WTC11 (cell line): ENCODE measurements at regions of chr2 and their contacts with region 1.

Region 1: GRCh38 chr2:174697255-174697654 is 67.0 kb downstream of the CHRNA1 start:
- DNase-seq: peak; percentile 76
- ATAC-seq: peak; percentile 94
- H3K4me3 Mint-ChIP-seq: no peak overlapping the region
- H3K27ac Mint-ChIP-seq: no peak overlapping the region
- H3K4me1 Mint-ChIP-seq: peaks cover 16% of the 10 kb centered on the region
- H3K27me3 Mint-ChIP-seq: no peaks in the 10 kb centered on the region
- CTCF ChIP-seq: peak; percentile 60

Region 2: DNA sequence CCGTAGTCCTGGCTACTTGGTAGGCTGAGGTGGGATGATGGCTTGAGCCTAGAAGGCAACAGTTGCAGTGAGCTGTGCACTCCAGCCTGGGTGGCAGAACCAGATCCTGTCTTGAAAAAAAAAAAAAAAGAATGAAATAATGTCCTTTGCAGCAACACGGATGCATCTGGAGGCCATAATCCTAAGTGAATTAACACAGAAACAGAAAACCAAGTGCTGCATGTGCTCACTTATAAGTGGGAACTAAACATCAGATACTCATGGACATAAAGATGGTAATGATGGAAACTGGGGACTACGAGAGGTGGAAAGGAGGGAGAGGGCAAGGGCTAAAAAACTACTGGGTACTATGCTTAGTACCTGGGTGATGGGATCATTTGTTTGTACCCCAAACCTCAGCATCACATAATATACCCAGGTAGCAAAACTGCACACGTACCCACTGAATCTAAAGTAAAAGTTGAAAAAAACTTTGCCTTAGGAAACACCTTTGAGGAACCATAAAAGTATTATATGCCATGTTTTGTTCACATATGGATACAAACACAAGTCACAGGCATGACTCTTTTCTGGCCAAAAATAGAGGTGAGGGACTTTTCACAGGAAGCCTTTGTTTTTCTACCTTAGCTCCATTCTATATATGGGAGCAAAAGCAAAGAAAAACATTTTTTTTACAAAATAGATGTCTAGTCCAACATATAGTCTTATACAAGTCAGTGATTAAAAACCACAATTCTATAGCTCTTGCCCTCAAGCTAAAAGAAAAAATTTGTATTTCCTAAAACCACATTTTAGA is 247.0 kb before region 1 on chr2:
- CTCF ChIA-PET with region 1: no interaction called
- POLR2A ChIA-PET with region 1: no interaction called
- DNase-seq: no peak
- ATAC-seq: no peak
- H3K4me3 Mint-ChIP-seq: no peak overlapping the region
- H3K27ac Mint-ChIP-seq: no peak overlapping the region
- H3K4me1 Mint-ChIP-seq: peaks cover under 1% of the 10 kb centered on the region
- H3K27me3 Mint-ChIP-seq: no peaks in the 10 kb centered on the region; the same call in 1 of the 2 replicates
- CTCF ChIP-seq: no peak

Region 3: DNA sequence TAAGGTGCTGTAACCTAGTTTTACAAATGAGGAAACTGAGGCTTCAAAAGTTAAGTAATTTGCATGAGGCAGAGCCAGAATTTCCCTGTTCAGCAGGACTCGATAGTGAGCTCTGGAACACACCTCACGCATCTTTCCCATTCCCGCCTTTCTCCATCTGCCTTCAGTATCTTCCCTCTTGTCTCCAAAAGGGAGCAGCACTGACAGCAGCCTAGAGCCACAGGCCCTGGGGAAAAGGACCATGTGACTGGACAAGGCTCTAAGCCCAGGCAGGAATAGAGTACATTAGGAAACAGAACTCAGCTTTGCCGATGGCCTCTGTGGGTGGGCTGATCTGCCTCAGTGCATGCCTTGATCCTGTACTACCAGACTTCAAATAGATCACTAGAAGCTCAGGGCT is 231.9 kb before region 1 on chr2:
- CTCF ChIA-PET with region 1: interaction called, 17 read pairs
- POLR2A ChIA-PET with region 1: no interaction called
- DNase-seq: peak; percentile 56
- ATAC-seq: peak; percentile 97
- H3K4me3 Mint-ChIP-seq: no peak overlapping the region
- H3K27ac Mint-ChIP-seq: no peak overlapping the region
- H3K4me1 Mint-ChIP-seq: no peaks in the 10 kb centered on the region
- H3K27me3 Mint-ChIP-seq: peaks cover 11% of the 10 kb centered on the region
- CTCF ChIP-seq: no peak

Region 4: GRCh38 chr2:174682578-174683391 is 14.5 kb before region 1 on chr2:
- CTCF ChIA-PET with region 1: interaction called, 26 read pairs
- POLR2A ChIA-PET with region 1: no interaction called
- DNase-seq: peak; percentile 72
- ATAC-seq: peak; percentile 66
- H3K4me3 Mint-ChIP-seq: peak overlapping the region; percentile 81
- H3K27ac Mint-ChIP-seq: no peak overlapping the region
- H3K4me1 Mint-ChIP-seq: peaks cover 17% of the 10 kb centered on the region
- H3K27me3 Mint-ChIP-seq: peaks cover 60% of the 10 kb centered on the region
- CTCF ChIP-seq: no peak

Region 5: DNA sequence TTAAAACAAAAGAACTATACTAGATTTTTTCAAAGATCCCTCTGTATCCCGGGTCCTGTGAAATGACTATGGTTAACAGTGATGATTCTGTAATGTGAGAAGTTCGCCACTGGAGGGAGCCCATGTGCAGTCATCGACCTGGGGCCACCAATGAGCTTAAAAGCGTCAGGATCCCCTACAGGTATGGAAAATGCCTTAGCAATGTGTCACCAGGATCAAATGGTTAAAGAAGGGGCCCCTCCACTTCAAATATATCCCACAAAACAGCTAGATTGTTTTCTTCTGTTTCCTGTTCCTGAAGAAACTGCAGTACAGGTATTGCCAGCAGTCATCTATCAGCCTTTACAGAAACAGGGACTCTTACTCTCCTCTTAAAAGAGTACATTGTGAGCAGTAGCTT is 51.7 kb after region 1 on chr2:
- CTCF ChIA-PET with region 1: interaction called, 24 read pairs
- POLR2A ChIA-PET with region 1: no interaction called
- DNase-seq: peak; percentile 85
- ATAC-seq: peak; percentile 94
- H3K4me3 Mint-ChIP-seq: no peak overlapping the region
- H3K27ac Mint-ChIP-seq: peak overlapping the region; percentile 4; the same call in 1 of the 2 replicates
- H3K4me1 Mint-ChIP-seq: peaks cover 33% of the 10 kb centered on the region
- H3K27me3 Mint-ChIP-seq: no peaks in the 10 kb centered on the region
- CTCF ChIP-seq: peak; percentile 69

Region 6: DNA sequence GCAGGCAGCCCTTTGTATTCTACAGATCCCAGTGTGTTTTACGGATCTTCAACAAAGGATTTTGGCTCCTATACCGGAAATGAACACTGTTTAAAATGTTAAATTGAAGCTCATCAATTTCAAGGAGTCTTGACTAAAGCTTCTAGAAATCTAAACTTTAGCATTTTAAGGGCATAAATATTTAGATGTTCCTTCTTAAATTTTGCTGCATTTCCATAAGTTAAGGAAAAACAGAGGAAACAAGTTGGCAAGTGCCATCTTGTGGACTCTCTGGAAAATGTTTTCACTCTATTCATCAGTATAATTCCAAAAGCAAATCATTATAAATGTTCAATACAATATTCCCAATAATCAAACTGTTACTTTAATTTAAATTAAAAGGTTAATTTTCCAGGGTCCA is 288.4 kb after region 1 on chr2:
- CTCF ChIA-PET with region 1: interaction called, 17 read pairs
- POLR2A ChIA-PET with region 1: no interaction called
- DNase-seq: no peak
- ATAC-seq: no peak
- H3K4me3 Mint-ChIP-seq: no peak overlapping the region
- H3K27ac Mint-ChIP-seq: no peak overlapping the region
- H3K4me1 Mint-ChIP-seq: peaks cover 33% of the 10 kb centered on the region
- H3K27me3 Mint-ChIP-seq: no peaks in the 10 kb centered on the region
- CTCF ChIP-seq: no peak

Region 7: DNA sequence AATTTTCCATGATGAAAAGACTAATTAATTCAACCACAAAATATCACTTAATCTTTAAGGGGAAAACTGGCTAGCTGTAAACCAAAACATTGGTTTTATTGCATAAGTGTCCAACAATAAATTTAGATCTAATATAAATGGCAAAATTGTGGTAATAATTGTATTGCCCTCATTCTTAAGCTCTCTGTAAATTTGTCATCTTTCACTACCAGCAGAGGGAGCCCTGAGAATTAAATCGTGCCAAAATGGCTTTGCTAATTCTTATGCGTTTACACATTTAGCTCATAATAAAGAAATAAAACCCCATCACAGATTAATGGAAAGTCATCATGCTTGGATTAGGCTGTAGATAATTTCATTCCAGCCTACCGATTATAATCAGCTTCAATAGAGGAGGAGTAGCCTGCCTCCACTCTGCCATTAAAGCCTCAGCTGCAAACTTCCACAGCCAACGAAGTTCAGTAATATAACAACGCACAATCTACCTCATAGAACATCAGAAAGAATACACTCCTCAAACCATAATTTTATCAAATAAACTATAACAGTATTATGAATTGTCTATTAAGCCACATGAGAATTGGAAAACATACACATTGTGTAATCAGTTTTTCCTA is 554.3 kb after region 1 on chr2:
- CTCF ChIA-PET with region 1: interaction called, 15 read pairs
- POLR2A ChIA-PET with region 1: no interaction called
- DNase-seq: no peak
- ATAC-seq: no peak
- H3K4me3 Mint-ChIP-seq: no peak overlapping the region
- H3K27ac Mint-ChIP-seq: no peak overlapping the region
- H3K4me1 Mint-ChIP-seq: 0 out of 2 replicates have a peak, but pooled peaks cover 2% of the 10 kb centered on the region
- H3K27me3 Mint-ChIP-seq: no peaks in the 10 kb centered on the region; the same call in 1 of the 2 replicates
- CTCF ChIP-seq: no peak; the same call in 1 of the 2 replicates